ENCODE measurements at regions of chr17 and their contacts with region 1.

Region 1: DNA sequence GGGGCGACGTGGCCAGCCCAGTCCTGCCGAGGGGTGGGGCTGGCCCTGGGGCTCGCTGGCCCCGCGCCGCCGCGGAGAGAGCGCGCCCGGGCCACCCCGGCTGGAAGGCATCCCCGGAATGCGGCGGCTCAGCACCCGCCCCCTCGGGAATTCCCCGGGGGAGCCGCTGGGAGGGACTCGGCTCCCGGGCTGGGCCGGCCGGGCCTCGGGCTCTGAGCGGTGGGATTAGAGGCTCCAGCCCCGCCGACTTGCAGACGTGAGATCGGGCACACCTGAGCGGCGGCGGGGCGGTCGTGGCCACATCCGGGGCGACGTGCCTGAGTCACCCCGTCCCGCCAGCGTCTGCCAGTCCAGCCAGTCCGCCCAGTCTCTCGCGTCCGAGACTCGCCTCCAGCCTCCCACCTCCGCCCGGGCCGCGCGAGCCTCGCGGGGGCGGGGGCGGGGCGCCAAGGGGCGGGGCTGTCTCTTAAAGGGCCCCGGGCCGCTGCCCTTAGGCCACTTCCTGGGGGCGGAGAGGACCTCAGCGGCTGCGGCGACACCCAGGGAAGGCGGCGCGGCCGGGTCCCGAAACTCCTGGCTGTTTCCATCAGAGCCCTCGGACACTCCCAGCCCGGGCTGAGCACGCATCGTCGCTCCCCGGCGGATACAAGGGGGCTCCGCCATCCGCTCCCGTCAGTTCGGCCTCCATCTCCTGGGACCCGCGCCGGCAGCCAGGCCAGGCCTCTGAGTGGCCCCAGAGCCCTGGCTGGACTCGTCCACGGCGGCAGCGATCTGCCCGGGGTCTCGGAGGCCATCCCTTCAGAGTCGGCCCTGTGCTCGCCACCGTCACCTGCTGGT is at the start of gene KCTD11:
- DNase-seq: peak in 8 of 9 experiments; percentile 64 to 90 (median 80)
- ATAC-seq: peak; percentile 48
- H3K4me3 ChIP-seq: peak within 1 kb of the TSS; percentile 62 to 73
- H3K4me3 Mint-ChIP-seq: peak within 1 kb of the TSS; percentile 87
- H3K27ac ChIP-seq: peak within 1 kb of the TSS; percentile 53 to 87
- H3K27ac Mint-ChIP-seq: peak within 1 kb of the TSS; percentile 88
- H3K4me1 ChIP-seq: peaks cover 42% of the 10 kb centered on the region
- H3K4me1 Mint-ChIP-seq: peaks cover 38% of the 10 kb centered on the region
- H3K27me3 ChIP-seq: no peaks in the 10 kb centered on the region
- H3K27me3 Mint-ChIP-seq: no peaks in the 10 kb centered on the region
- CTCF ChIP-seq: peak; percentile 20
- total RNA-seq, gene KCTD11: 1.4 to 1.8 TPM

Region 2: GRCh38 chr17:7296189-7296902 is 55.5 kb before region 1 on chr17:
- CTCF ChIA-PET with region 1: interaction called, 20 read pairs
- POLR2A ChIA-PET with region 1: interaction called, 3 read pairs
- intact Hi-C with region 1: no loop called
- DNase-seq: peak in 7 of 9 experiments; percentile 54 to 82 (median 75)
- ATAC-seq: no peak
- H3K4me3 ChIP-seq: no peak overlapping the region
- H3K4me3 Mint-ChIP-seq: peak overlapping the region; percentile 75
- H3K27ac ChIP-seq: no peak overlapping the region
- H3K27ac Mint-ChIP-seq: no peak overlapping the region
- H3K4me1 ChIP-seq: peaks cover 25% of the 10 kb centered on the region
- H3K4me1 Mint-ChIP-seq: peaks cover 19% of the 10 kb centered on the region
- H3K27me3 ChIP-seq: peaks cover 0 to 15% of the 10 kb centered on the region in 2 experiments
- H3K27me3 Mint-ChIP-seq: peaks cover 9% of the 10 kb centered on the region
- CTCF ChIP-seq: peak; percentile 89

Region 3: DNA sequence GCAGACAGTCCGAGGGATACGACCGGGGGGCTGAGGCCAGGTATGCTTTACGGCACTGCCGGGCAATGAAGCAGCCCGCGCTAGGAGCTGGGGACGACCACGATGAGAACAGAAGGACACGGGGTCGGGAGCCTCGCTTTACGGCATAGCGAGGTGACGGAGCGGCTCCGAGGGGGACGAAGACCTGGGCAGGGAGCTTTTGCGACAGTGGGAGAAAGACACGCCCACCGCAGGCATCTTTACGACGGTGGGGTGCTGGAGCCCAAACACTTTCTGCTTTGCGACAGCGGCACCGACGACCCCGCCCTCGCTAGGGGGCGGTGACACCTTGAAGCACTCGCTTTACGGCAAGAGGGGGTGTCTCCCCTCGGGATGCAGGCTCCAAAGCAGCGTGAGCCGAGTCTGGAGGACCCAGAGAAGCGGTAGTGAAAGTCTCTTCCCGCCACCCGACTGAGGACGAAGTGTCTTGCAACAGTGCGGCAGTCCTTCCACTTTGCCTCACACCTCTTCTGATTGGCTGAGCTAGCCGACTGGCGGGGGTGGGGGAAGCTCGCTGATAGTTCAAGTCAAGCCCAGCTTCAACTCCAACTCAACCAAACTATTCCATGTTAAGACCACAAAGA is 22.4 kb before region 1 on chr17:
- CTCF ChIA-PET with region 1: interaction called, 47 read pairs
- POLR2A ChIA-PET with region 1: interaction called, 49 read pairs
- intact Hi-C with region 1: loop called (anchors 1 kb)
- DNase-seq: peak; percentile 92 to 99 (median 96)
- ATAC-seq: peak; percentile 79
- H3K4me3 ChIP-seq: peak overlapping the region; percentile 96 to 100
- H3K4me3 Mint-ChIP-seq: peak overlapping the region; percentile 98
- H3K27ac ChIP-seq: peak overlapping the region; percentile 80 to 95
- H3K27ac Mint-ChIP-seq: peak overlapping the region; percentile 96
- H3K4me1 ChIP-seq: peaks cover 36% of the 10 kb centered on the region
- H3K4me1 Mint-ChIP-seq: peaks cover 37% of the 10 kb centered on the region
- H3K27me3 ChIP-seq: no peaks in the 10 kb centered on the region
- H3K27me3 Mint-ChIP-seq: no peaks in the 10 kb centered on the region
- CTCF ChIP-seq: no peak

Region 4: DNA sequence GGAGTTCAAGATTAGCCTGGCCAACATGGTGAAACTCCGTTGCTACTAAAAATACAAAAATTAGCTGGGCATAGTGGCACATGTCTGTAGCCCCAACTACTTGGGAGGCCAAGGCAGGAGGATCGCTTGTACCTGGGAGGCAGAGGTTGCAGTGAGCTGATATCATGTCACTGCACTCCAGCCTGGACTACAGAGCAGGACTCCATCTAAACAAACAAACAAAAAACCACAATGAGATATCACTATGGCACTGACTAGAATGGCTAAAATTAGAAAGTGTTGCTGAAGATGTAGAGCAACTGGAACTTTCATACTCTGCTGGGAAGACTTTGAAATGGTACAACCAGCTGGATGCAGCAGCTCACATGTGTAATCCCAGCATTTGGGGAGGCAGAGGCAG is 22.5 kb after region 1 on chr17:
- CTCF ChIA-PET with region 1: interaction called, 16 read pairs
- POLR2A ChIA-PET with region 1: interaction called, 3 read pairs
- intact Hi-C with region 1: no loop called
- DNase-seq: no peak
- ATAC-seq: no peak
- H3K4me3 ChIP-seq: no peak overlapping the region
- H3K4me3 Mint-ChIP-seq: no peak overlapping the region
- H3K27ac ChIP-seq: no peak overlapping the region
- H3K27ac Mint-ChIP-seq: no peak overlapping the region
- H3K4me1 ChIP-seq: no peaks in the 10 kb centered on the region
- H3K4me1 Mint-ChIP-seq: no peaks in the 10 kb centered on the region
- H3K27me3 ChIP-seq: peaks cover 0 to 2% of the 10 kb centered on the region in 2 experiments
- H3K27me3 Mint-ChIP-seq: peaks cover 14% of the 10 kb centered on the region
- CTCF ChIP-seq: no peak

Region 5: GRCh38 chr17:7403977-7404736 is 52.3 kb after region 1 on chr17 and contains the start of gene TMEM256:
- CTCF ChIA-PET with region 1: interaction called, 12 read pairs
- POLR2A ChIA-PET with region 1: no interaction called
- intact Hi-C with region 1: loop called in 1 of 2 experiments (anchors 1 kb)
- DNase-seq: peak; percentile 90 to 99 (median 94)
- ATAC-seq: peak; percentile 83
- H3K4me3 ChIP-seq: peak within 1 kb of the TSS; percentile 75 to 83
- H3K4me3 Mint-ChIP-seq: peak within 1 kb of the TSS; percentile 95
- H3K27ac ChIP-seq: peak within 1 kb of the TSS; percentile 61 to 81
- H3K27ac Mint-ChIP-seq: peak within 1 kb of the TSS; percentile 96
- H3K4me1 ChIP-seq: peaks cover 24% of the 10 kb centered on the region
- H3K4me1 Mint-ChIP-seq: peaks cover 31% of the 10 kb centered on the region
- H3K27me3 ChIP-seq: no peaks in the 10 kb centered on the region
- H3K27me3 Mint-ChIP-seq: no peaks in the 10 kb centered on the region
- CTCF ChIP-seq: no peak
- total RNA-seq, gene TMEM256: 27.1 to 29.1 TPM

Region 6: GRCh38 chr17:7561028-7561575 is 209.2 kb after region 1 on chr17:
- CTCF ChIA-PET with region 1: interaction called, 44 read pairs
- POLR2A ChIA-PET with region 1: interaction called, 8 read pairs
- intact Hi-C with region 1: loop called (anchors 1 kb)
- DNase-seq: peak; percentile 67 to 89 (median 81)
- ATAC-seq: peak; percentile 68
- H3K4me3 ChIP-seq: peak overlapping the region; percentile 50 to 95
- H3K4me3 Mint-ChIP-seq: peak overlapping the region; percentile 94
- H3K27ac ChIP-seq: peak overlapping the region; percentile 91 to 97
- H3K27ac Mint-ChIP-seq: peak overlapping the region; percentile 99
- H3K4me1 ChIP-seq: peaks cover 49% of the 10 kb centered on the region
- H3K4me1 Mint-ChIP-seq: peaks cover 50% of the 10 kb centered on the region
- H3K27me3 ChIP-seq: no peaks in the 10 kb centered on the region
- H3K27me3 Mint-ChIP-seq: no peaks in the 10 kb centered on the region
- CTCF ChIP-seq: peak; percentile 85

Region 7: GRCh38 chr17:7844292-7845154 is 492.6 kb after region 1 on chr17:
- CTCF ChIA-PET with region 1: no interaction called
- POLR2A ChIA-PET with region 1: no interaction called
- intact Hi-C with region 1: loop called in 1 of 2 experiments (anchors 5 kb)
- DNase-seq: peak; percentile 67 to 94 (median 79)
- ATAC-seq: peak; percentile 8
- H3K4me3 ChIP-seq: peak overlapping the region; percentile 94 to 98
- H3K4me3 Mint-ChIP-seq: peak overlapping the region; percentile 91
- H3K27ac ChIP-seq: peak overlapping the region; percentile 98 to 100
- H3K27ac Mint-ChIP-seq: peak overlapping the region; percentile 99
- H3K4me1 ChIP-seq: peaks cover 39% of the 10 kb centered on the region
- H3K4me1 Mint-ChIP-seq: peaks cover 33% of the 10 kb centered on the region
- H3K27me3 ChIP-seq: no peaks in the 10 kb centered on the region
- H3K27me3 Mint-ChIP-seq: no peaks in the 10 kb centered on the region
- CTCF ChIP-seq: no peak

Measured in CD8-positive, alpha-beta T cell (primary cell).